Posterior vena cava (tissue), 2 donors: ENCODE measurements at regions of chr1 and their contacts with region 1.

Region 1: GRCh38 chr1:226973898-226974543 is 33.9 kb downstream of the COQ8A start:
- DNase-seq: no peak

Region 2: GRCh38 chr1:226912587-226913176 is 61.3 kb before region 1 on chr1:
- intact Hi-C with region 1: no loop called
- DNase-seq: no peak

Region 3: DNA sequence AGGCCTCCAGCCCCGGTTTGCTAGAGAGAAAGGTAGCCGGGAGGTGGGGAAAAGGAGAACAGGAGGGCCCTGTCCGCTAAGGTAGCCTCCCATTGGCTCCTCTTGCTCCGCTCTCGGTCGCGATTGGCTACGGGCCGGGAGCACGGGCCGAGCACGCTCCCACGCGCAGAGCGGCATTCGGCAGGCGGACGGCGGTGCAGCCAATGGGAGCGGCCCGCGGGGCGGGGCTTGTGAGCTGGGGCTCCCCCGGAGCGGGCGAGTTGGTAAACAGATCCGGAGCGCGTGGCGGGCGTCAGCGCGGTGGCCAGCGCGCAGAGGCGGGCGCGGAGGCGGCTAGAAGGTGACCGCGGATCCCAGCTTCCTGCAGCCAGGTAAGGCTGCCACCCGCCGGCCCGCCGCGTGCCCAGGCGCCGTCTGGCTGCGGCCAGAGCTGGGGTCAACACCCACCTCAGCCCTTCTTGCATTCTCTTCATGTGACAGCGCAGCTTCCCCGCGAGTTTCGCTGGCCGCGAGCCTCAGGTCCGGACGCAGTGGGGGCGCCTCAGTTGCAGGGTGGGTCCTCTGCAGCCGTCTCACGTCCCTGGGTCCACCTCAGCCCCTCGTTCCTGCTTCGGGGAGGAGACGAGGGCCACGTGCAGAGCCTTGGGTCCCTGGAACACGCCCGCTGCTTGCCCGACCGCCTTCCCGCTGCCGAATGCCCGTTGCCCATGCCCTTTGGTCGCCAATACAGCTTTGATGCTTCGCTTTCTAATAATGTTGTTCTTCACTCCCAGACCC is 33.8 kb before region 1 on chr1 and contains the start of gene COQ8A:
- intact Hi-C with region 1: loop called in 1 of 2 experiments (anchors 1 kb)
- DNase-seq: peak; percentile 99
- total RNA-seq, gene COQ8A: 15.4 to 21.1 TPM

Region 4: GRCh38 chr1:226953175-226953800 is 20.7 kb before region 1 on chr1:
- intact Hi-C with region 1: no loop called
- DNase-seq: no peak

Region 5: DNA sequence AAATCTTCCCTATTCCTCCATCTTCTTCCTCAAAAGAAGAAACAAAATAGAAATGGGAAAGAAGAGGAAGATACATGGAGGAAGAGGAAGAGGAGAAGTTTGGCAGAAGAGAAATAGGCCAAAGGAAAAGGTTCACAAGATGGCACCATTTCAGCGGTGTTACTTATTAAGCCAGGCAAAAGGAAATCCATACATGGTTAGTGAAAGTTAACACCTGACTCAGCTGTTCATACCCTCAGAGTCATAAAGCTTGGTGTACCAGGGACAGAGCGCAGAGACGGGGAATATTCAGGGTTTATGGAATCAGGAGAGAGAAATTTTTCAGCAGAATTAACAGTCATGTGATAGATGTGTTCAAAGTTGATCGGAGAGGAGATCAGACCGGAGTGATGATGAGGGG is 36.6 kb after region 1 on chr1:
- intact Hi-C with region 1: no loop called
- DNase-seq: no peak